HepG2 (cell line): ENCODE measurements at regions of chr1 and their contacts with region 1.

Region 1: GRCh38 chr1:61077676-61078541 is 4.5 kb upstream of the NFIA start:
- DNase-seq: peak; percentile 99
- ATAC-seq: peak; percentile 51
- H3K4me3 ChIP-seq: peak overlapping the region; percentile 72 to 92 (median 80)
- H3K27ac ChIP-seq: peak overlapping the region; percentile 90
- H3K4me1 ChIP-seq: peaks cover 43% of the 10 kb centered on the region
- H3K27me3 ChIP-seq: no peaks in the 10 kb centered on the region; a peak in 1 of 5 replicates
- CTCF ChIP-seq: no peak
- EP300 ChIP-seq: no peak
- POLR2A ChIP-seq: no peak
- RAD21 ChIP-seq: no peak

Region 2: GRCh38 chr1:61056573-61057439 is 21.1 kb before region 1 on chr1:
- CTCF ChIA-PET with region 1: no interaction called
- POLR2A ChIA-PET with region 1: interaction called, 8 read pairs
- in situ Hi-C with region 1: no loop called
- intact Hi-C with region 1: loop called (anchors 2 kb)
- DNase-seq: no peak
- ATAC-seq: peak; percentile 42
- H3K4me3 ChIP-seq: peak overlapping the region; percentile 66 to 93 (median 76)
- H3K27ac ChIP-seq: peak overlapping the region; percentile 47
- H3K4me1 ChIP-seq: peaks cover 41% of the 10 kb centered on the region
- H3K27me3 ChIP-seq: peaks cover 2 to 27% of the 10 kb centered on the region in 2 experiments; a peak in 4 of 5 replicates
- CTCF ChIP-seq: 0 out of 2 replicates have a peak, but pooled peaks have one; percentile 4
- EP300 ChIP-seq: no peak
- POLR2A ChIP-seq: no peak
- RAD21 ChIP-seq: no peak

Region 3: GRCh38 chr1:61111084-61111788 is 33.3 kb after region 1 on chr1:
- CTCF ChIA-PET with region 1: no interaction called
- POLR2A ChIA-PET with region 1: interaction called, 4 read pairs
- in situ Hi-C with region 1: no loop called
- intact Hi-C with region 1: loop called (anchors 5 kb)
- DNase-seq: no peak
- ATAC-seq: no peak
- H3K4me3 ChIP-seq: no peak overlapping the region
- H3K27ac ChIP-seq: no peak overlapping the region
- H3K4me1 ChIP-seq: peaks cover 69% of the 10 kb centered on the region
- H3K27me3 ChIP-seq: no peaks in the 10 kb centered on the region; a peak in 1 of 5 replicates
- CTCF ChIP-seq: no peak
- EP300 ChIP-seq: no peak
- POLR2A ChIP-seq: no peak
- RAD21 ChIP-seq: no peak

Region 4: DNA sequence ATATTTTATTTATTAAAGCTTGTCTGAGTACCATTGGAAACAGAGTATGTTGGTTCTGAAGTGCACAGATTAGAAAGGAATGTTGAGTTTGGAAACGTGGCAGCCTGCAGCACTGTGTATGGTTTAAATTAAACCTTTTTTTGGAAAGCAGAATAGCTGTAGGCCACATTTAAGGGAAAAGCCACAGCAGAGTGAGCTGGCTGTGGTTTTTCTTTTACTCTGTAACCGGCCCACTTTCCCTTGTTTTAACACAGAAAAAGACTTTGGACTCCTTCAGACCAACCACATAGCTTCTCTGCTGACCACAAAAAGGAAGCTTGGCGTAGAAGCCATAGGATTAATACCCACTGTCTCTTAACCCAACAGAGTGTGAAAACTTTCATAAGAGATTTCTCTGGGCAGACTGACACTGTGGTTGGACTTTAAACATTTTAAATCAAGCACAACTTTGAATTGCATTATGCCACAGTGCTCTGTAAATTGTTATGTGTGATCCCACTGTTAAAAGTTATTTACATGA is 79.6 kb after region 1 on chr1:
- CTCF ChIA-PET with region 1: no interaction called
- POLR2A ChIA-PET with region 1: interaction called, 10 read pairs
- in situ Hi-C with region 1: no loop called
- intact Hi-C with region 1: no loop called
- DNase-seq: peak; percentile 85
- ATAC-seq: peak; percentile 93
- H3K4me3 ChIP-seq: peak overlapping the region in 1 of 3 experiments; percentile 31; a peak in 2 of 6 replicates
- H3K27ac ChIP-seq: peak overlapping the region; percentile 65
- H3K4me1 ChIP-seq: peaks cover 58% of the 10 kb centered on the region
- H3K27me3 ChIP-seq: no peaks in the 10 kb centered on the region
- CTCF ChIP-seq: no peak
- EP300 ChIP-seq: 0 out of 4 replicates have a peak, but pooled peaks of 1 of the 2 experiments have one; percentile 39
- POLR2A ChIP-seq: no peak
- RAD21 ChIP-seq: no peak

Region 5: GRCh38 chr1:61184040-61184713 is 106.3 kb after region 1 on chr1:
- CTCF ChIA-PET with region 1: no interaction called
- POLR2A ChIA-PET with region 1: interaction called, 10 read pairs
- in situ Hi-C with region 1: no loop called
- intact Hi-C with region 1: loop called (anchors 10 kb)
- DNase-seq: peak; percentile 74
- ATAC-seq: peak; percentile 75
- H3K4me3 ChIP-seq: peak overlapping the region; percentile 31 to 65 (median 51)
- H3K27ac ChIP-seq: peak overlapping the region; percentile 98
- H3K4me1 ChIP-seq: peaks cover 61% of the 10 kb centered on the region
- H3K27me3 ChIP-seq: no peaks in the 10 kb centered on the region
- CTCF ChIP-seq: no peak
- EP300 ChIP-seq: no peak
- POLR2A ChIP-seq: peak in 1 of 2 experiments; percentile 17; a peak in 1 of 4 replicates
- RAD21 ChIP-seq: no peak

Region 6: GRCh38 chr1:61221642-61222041 is 143.7 kb after region 1 on chr1:
- CTCF ChIA-PET with region 1: no interaction called
- POLR2A ChIA-PET with region 1: interaction called, 3 read pairs
- in situ Hi-C with region 1: no loop called
- intact Hi-C with region 1: loop called (anchors 2 kb)
- DNase-seq: peak; percentile 78
- ATAC-seq: peak; percentile 69
- H3K4me3 ChIP-seq: peak overlapping the region in 2 of 3 experiments; percentile 18 to 26; a peak in 3 of 6 replicates
- H3K27ac ChIP-seq: peak overlapping the region; percentile 55
- H3K4me1 ChIP-seq: peaks cover 50% of the 10 kb centered on the region
- H3K27me3 ChIP-seq: no peaks in the 10 kb centered on the region
- CTCF ChIP-seq: no peak
- EP300 ChIP-seq: peak in 1 of 2 experiments; percentile 38; a peak in 1 of 4 replicates
- POLR2A ChIP-seq: no peak
- RAD21 ChIP-seq: no peak